Left ventricle myocardium superior (tissue), 1 donor: ENCODE measurements at regions of chr13 and their contacts with region 1.

Region 1: GRCh38 chr13:77853703-77854102 is 64.9 kb downstream of the EDNRB start:
- DNase-seq: no peak
- ATAC-seq: peak; percentile 19

Region 2: GRCh38 chr13:77896536-77896935 is 42.8 kb after region 1 on chr13:
- intact Hi-C with region 1: loop called (anchors 2 kb)
- DNase-seq: no peak
- ATAC-seq: peak; percentile 97